Panc1 (cell line): ENCODE measurements at regions of chr4 and their contacts with region 1.

Region 1: DNA sequence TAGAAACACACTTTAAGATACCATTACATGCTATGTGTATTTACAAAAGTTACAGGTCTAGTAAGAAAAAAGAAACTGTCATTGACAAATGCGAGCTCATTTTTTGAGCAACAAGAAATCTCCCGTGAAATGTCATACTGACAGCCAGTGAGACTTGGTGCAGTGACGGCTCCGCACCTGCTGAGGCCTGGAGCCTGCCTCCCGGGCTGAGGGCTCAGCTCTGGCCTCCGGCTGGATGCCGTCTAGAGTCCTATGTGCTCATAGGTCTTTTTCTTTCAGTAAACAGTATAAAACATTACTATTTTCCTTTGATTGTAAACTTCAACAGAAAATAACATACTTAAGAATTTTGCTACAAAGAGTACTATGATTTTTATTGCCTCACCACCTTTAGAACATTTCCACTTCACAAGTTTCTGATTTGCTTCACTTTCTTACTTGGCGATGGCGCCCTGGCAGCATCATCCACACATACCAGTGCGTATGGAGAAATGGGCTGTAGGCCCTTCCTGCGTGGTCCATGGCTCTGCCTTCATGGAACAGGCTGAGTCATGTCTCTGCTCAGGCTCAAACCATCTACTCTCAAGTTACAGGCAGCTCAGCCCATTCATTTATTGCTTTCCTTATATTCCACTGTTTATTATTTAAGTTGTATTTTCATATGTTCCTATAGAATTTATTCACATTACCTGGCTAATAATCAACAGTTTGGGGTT is 21.3 kb downstream of the CASP3 start:
- DNase-seq: no peak
- ATAC-seq: no peak
- H3K4me3 ChIP-seq: no peak overlapping the region
- H3K27ac ChIP-seq: no peak overlapping the region
- H3K4me1 ChIP-seq: no peaks in the 10 kb centered on the region
- H3K27me3 ChIP-seq: no peaks in the 10 kb centered on the region
- CTCF ChIP-seq: no peak

Region 2: GRCh38 chr4:184583738-184584502 is 44.0 kb before region 1 on chr4:
- CTCF ChIA-PET with region 1: no interaction called
- POLR2A ChIA-PET with region 1: interaction called, 14 read pairs
- in situ Hi-C with region 1: no loop called
- intact Hi-C with region 1: no loop called
- DNase-seq: no peak
- ATAC-seq: no peak
- H3K4me3 ChIP-seq: no peak overlapping the region
- H3K27ac ChIP-seq: no peak overlapping the region
- H3K4me1 ChIP-seq: no peaks in the 10 kb centered on the region
- H3K27me3 ChIP-seq: no peaks in the 10 kb centered on the region
- CTCF ChIP-seq: no peak